Panc1 (cell line): ENCODE measurements at regions of chr12 and their contacts with region 1.

Region 1: GRCh38 chr12:5083955-5084849 is 40.5 kb downstream of the KCNA5 start:
- DNase-seq: peak; percentile 35
- ATAC-seq: no peak
- H3K4me3 ChIP-seq: no peak overlapping the region
- H3K27ac ChIP-seq: no peak overlapping the region
- H3K4me1 ChIP-seq: no peaks in the 10 kb centered on the region
- H3K27me3 ChIP-seq: peaks cover 2% of the 10 kb centered on the region; the same call in 1 of the 2 replicates
- CTCF ChIP-seq: peak; percentile 70

Region 2: GRCh38 chr12:4849115-4849541 is 235.1 kb before region 1 on chr12:
- CTCF ChIA-PET with region 1: no interaction called
- POLR2A ChIA-PET with region 1: no interaction called
- in situ Hi-C with region 1: no loop called
- intact Hi-C with region 1: no loop called
- DNase-seq: peak; percentile 17
- ATAC-seq: no peak
- H3K4me3 ChIP-seq: no peak overlapping the region
- H3K27ac ChIP-seq: no peak overlapping the region
- H3K4me1 ChIP-seq: no peaks in the 10 kb centered on the region
- H3K27me3 ChIP-seq: no peaks in the 10 kb centered on the region
- CTCF ChIP-seq: peak; percentile 75

Region 3: DNA sequence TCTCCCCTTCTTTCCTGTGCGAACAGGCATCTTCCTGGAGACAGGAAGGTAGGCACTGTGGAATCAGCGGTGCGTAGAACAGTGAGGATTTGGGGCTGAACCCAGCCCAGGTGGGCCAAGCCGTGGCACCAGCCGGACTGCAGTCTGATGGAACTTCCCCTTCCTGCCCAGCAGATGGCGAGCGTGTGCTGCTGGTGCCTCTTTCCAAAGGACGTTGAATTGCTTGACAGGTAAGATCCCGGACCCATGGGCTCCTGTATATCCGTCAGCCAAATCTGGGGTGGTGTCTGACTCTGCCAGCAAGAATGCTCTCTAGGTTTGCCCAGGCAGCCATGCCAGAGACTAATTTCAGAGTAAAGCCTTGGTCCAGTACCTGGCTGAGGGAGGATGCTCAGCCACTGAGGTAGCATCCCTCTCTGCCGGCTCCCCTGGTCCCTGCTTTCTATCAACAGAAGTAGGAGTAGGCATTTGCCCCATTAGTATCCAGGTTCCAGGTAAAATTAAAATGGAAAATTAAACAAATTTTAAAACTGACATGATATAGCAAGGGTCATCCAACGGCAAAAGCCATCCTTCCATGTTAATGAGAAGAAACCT is 61.6 kb before region 1 on chr12:
- CTCF ChIA-PET with region 1: no interaction called
- POLR2A ChIA-PET with region 1: no interaction called
- in situ Hi-C with region 1: no loop called
- intact Hi-C with region 1: loop called (anchors 2 kb)
- DNase-seq: peak; percentile 28
- ATAC-seq: peak; percentile 72; the same call in 1 of the 2 replicates
- H3K4me3 ChIP-seq: no peak overlapping the region
- H3K27ac ChIP-seq: no peak overlapping the region
- H3K4me1 ChIP-seq: no peaks in the 10 kb centered on the region
- H3K27me3 ChIP-seq: no peaks in the 10 kb centered on the region
- CTCF ChIP-seq: peak; percentile 85

Region 4: DNA sequence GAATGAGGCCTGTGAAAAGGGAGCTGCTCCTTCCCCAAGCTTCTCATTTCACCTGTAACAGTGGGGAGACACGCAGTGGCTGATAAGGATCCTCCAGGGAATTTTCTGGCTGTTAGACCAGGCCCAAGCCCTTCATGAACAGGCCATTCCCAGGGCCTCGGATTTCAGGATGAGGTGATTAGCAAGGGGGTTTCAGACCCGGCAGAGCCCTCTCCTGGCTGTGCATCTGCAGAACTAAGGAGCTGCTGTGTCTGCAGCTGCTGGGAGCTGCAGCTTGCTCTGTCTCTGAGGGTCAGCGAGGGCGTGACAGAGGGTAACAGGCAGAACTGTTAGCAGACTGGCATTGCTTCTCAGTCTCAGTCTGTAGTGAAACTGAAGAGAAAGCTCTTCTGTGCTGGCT is 69.9 kb after region 1 on chr12:
- CTCF ChIA-PET with region 1: no interaction called
- POLR2A ChIA-PET with region 1: no interaction called
- in situ Hi-C with region 1: no loop called
- intact Hi-C with region 1: no loop called
- DNase-seq: no peak
- ATAC-seq: no peak
- H3K4me3 ChIP-seq: no peak overlapping the region
- H3K27ac ChIP-seq: no peak overlapping the region
- H3K4me1 ChIP-seq: no peaks in the 10 kb centered on the region
- H3K27me3 ChIP-seq: 0 out of 2 replicates have a peak, but pooled peaks cover 2% of the 10 kb centered on the region
- CTCF ChIP-seq: no peak